ENCODE measurements at regions of chr15 and their contacts with region 1.

Region 1: GRCh38 chr15:57306161-57306943 is 70.0 kb upstream of the CGNL1 start:
- DNase-seq: peak; percentile 51 to 92 (median 80)
- ATAC-seq: peak; percentile 85
- H3K4me3 ChIP-seq: peak overlapping the region; percentile 52
- H3K4me3 Mint-ChIP-seq: peak overlapping the region; percentile 15 to 71 (median 60)
- H3K27ac ChIP-seq: no peak overlapping the region
- H3K27ac Mint-ChIP-seq: peak overlapping the region in 1 of 9 donors; percentile 78
- H3K4me1 ChIP-seq: peaks cover 4 to 5% of the 10 kb centered on the region in 2 donors
- H3K4me1 Mint-ChIP-seq: peaks cover 0 to 9% (median 5%) of the 10 kb centered on the region in 7 donors
- H3K27me3 ChIP-seq: no peaks in the 10 kb centered on the region
- H3K27me3 Mint-ChIP-seq: peaks cover 0 to 14% (median 3%) of the 10 kb centered on the region in 5 donors

Region 2: GRCh38 chr15:56496635-56497034 is 809.7 kb before region 1 on chr15:
- CTCF ChIA-PET with region 1: interaction called, 12 read pairs
- POLR2A ChIA-PET with region 1: no interaction called
- intact Hi-C with region 1: loop called (anchors 1 kb)
- DNase-seq: peak in 5 of 9 donors; percentile 19 to 42 (median 35)
- ATAC-seq: peak; percentile 69
- H3K4me3 ChIP-seq: no peak overlapping the region
- H3K4me3 Mint-ChIP-seq: peak overlapping the region in 2 of 10 donors; percentile 14 to 40
- H3K27ac ChIP-seq: no peak overlapping the region
- H3K27ac Mint-ChIP-seq: no peak overlapping the region
- H3K4me1 ChIP-seq: no peaks in the 10 kb centered on the region
- H3K4me1 Mint-ChIP-seq: peaks cover 0 to 8% (median 3%) of the 10 kb centered on the region in 7 donors
- H3K27me3 ChIP-seq: no peaks in the 10 kb centered on the region
- H3K27me3 Mint-ChIP-seq: peaks cover 9 to 32% (median 20%) of the 10 kb centered on the region in 5 donors

Region 3: DNA sequence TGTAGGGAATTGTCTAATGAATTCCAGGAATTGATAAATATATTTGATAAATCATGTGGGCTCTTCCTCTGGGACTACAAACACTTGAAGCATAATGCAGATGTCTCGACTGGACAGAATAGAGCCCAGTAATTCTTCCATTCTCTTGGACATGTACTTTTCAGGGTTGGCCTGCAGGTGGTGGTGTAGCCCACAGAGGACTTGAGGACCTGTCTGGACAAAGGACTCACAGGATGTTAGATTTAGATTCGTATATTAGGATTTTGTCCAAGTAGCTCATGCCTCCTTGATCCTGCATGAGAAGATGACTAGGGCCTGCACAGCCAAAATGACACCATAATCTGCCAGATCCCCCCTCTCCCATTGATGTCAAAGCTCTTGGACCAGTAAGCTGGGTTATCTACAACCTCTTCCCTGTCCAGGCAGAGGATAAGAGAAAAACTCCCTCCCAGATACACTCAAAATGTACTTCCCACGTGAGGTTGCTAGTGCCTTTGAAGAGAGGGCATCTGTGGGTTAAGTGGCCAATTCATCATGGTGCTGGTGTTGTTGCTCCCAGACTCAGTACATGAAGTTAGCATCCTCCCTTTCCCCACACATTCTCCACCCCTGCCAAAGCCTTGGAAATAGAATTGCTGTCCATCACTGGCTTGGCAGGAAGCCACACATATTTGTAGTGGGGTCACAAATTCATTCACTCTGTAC is 484.5 kb before region 1 on chr15:
- CTCF ChIA-PET with region 1: interaction called, 3 read pairs
- POLR2A ChIA-PET with region 1: no interaction called
- intact Hi-C with region 1: loop called in 1 of 2 experiments (anchors 2 kb)
- DNase-seq: peak in 7 of 9 donors; percentile 12 to 46 (median 32)
- ATAC-seq: peak; percentile 62
- H3K4me3 ChIP-seq: no peak overlapping the region
- H3K4me3 Mint-ChIP-seq: no peak overlapping the region
- H3K27ac ChIP-seq: no peak overlapping the region
- H3K27ac Mint-ChIP-seq: no peak overlapping the region
- H3K4me1 ChIP-seq: no peaks in the 10 kb centered on the region
- H3K4me1 Mint-ChIP-seq: peaks cover 0 to 4% (median 0%) of the 10 kb centered on the region in 7 donors
- H3K27me3 ChIP-seq: no peaks in the 10 kb centered on the region
- H3K27me3 Mint-ChIP-seq: no peaks in the 10 kb centered on the region

Region 4: DNA sequence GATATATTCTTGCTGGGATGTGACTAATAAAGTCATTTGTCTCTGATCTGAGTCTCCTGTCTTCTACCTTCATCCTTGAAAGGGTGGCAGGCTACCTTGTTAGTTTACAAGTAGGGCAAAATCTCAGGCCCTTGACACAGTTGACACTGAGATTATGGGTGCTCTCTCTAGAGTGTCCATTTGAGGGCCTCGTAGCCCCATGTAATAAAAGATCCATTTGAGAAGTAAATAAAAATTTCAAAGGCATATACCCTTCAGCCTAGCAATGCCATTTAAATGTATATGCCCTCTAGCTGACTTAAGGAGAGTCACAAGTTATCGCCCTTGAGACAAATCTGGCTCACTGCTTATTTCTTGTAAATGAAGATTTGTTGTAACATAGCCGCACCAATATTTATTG is 289.3 kb before region 1 on chr15:
- CTCF ChIA-PET with region 1: no interaction called
- POLR2A ChIA-PET with region 1: no interaction called
- intact Hi-C with region 1: loop called in 1 of 2 experiments (anchors 2 kb)
- DNase-seq: peak in 1 of 9 donors; percentile 1
- ATAC-seq: peak; percentile 27
- H3K4me3 ChIP-seq: no peak overlapping the region
- H3K4me3 Mint-ChIP-seq: no peak overlapping the region
- H3K27ac ChIP-seq: no peak overlapping the region
- H3K27ac Mint-ChIP-seq: no peak overlapping the region
- H3K4me1 ChIP-seq: peaks cover 0 to 4% of the 10 kb centered on the region in 2 donors
- H3K4me1 Mint-ChIP-seq: peaks cover 6 to 82% (median 60%) of the 10 kb centered on the region in 7 donors
- H3K27me3 ChIP-seq: no peaks in the 10 kb centered on the region
- H3K27me3 Mint-ChIP-seq: no peaks in the 10 kb centered on the region

Region 5: GRCh38 chr15:57281321-57281720 is 25.0 kb before region 1 on chr15:
- CTCF ChIA-PET with region 1: no interaction called
- POLR2A ChIA-PET with region 1: no interaction called
- intact Hi-C with region 1: no loop called
- DNase-seq: no peak
- ATAC-seq: no peak
- H3K4me3 ChIP-seq: no peak overlapping the region
- H3K4me3 Mint-ChIP-seq: no peak overlapping the region
- H3K27ac ChIP-seq: no peak overlapping the region
- H3K27ac Mint-ChIP-seq: peak overlapping the region in 3 of 9 donors; percentile 38 to 48 (median 39)
- H3K4me1 ChIP-seq: no peaks in the 10 kb centered on the region
- H3K4me1 Mint-ChIP-seq: peaks cover 5 to 17% (median 10%) of the 10 kb centered on the region in 7 donors
- H3K27me3 ChIP-seq: no peaks in the 10 kb centered on the region
- H3K27me3 Mint-ChIP-seq: no peaks in the 10 kb centered on the region

Measured in naive thymus-derived CD4-positive, alpha-beta T cell (primary cell).